PC-3 (cell line): ENCODE measurements at regions of chr6 and their contacts with region 1.

Region 1: DNA sequence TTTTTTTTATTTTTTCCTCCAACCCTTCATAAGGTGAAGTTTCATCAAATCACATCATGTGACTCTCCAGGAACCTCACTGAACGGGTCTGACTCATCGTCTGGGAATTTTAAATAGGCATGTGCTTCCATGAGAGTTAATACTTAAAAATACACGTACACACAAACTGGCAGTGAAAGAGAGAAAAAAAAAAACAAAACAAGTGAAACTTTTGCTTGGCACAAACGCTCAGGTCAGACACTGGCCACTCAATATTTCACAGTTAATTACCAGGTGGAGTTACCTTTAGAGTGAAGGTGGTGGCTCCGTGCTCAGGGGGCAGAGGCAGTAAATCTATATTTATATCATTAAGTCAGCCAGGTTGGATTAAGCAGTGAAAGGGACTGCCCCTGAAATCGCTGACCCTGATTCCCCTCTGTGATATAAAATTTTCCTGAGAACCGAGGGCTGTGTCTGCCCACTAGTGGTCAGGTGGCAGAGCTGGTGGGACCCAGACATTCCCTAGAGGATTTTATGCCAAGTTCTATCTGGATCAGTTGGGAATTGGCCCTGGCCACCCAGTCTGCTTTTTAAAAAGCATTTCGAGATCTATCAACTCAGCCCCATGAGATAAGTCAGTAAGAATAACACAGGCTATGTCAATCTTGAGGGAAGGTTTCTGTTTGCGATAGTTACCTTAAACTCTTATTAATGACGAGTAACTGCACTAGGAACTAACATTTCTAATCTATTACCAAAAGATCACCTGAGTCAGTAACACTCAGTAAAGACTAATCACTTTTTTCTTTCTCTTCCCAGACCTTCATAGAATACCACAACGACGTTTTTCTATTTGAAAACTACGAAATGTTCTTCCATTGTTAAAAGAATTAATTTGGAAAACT is 259.1 kb downstream of the HDGFL1 start:
- DNase-seq: peak; percentile 97
- ATAC-seq: peak; percentile 55
- H3K4me3 ChIP-seq: peak overlapping the region; percentile 42
- H3K27ac ChIP-seq: peak overlapping the region; percentile 77
- H3K4me1 ChIP-seq: peaks cover 42% of the 10 kb centered on the region
- H3K27me3 ChIP-seq: no peaks in the 10 kb centered on the region
- CTCF ChIP-seq: peak; percentile 94

Region 2: DNA sequence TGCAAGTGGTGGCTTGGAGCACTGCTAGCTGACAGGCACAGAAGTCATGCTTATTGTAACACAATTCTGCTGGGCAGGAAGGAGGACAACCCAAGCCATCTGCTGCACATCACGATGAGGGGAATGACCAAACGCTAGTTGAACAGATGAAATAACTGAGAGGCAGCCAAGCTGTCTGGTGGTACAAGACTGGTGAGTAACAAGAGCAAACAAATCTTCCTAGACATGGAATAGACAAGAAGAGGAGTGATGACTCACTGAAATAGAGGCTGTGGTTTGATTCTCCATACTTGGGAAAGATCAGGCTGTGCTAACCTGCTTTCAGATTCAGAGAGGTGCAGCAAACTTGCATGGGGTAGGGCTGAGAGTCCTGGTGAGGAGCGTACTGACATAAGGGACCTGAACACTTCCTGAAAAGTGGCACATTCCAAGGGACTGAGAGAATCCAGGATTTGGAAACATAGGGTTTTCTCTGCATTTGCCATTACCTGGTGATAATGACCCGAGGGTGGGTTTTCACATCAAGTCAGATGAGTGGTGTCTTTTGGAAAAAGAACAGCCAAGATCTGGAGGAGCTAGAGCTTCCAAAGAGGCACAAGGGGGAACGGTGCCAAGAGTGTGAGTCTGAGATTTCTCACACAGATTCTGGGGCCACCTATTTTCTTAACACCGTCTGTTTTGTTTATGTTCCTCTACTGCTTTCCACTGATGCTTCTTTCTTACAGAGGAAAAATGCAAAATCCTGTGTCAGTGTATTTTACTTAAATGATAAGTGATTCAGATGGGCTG is 591.6 kb before region 1 on chr6:
- CTCF ChIA-PET with region 1: no interaction called
- POLR2A ChIA-PET with region 1: no interaction called
- intact Hi-C with region 1: loop called (anchors 5 kb)
- DNase-seq: peak; percentile 97
- ATAC-seq: peak; percentile 90
- H3K4me3 ChIP-seq: peak overlapping the region; percentile 34; the same call in 1 of the 2 replicates
- H3K27ac ChIP-seq: peak overlapping the region; percentile 91
- H3K4me1 ChIP-seq: peaks cover 31% of the 10 kb centered on the region
- H3K27me3 ChIP-seq: no peaks in the 10 kb centered on the region
- CTCF ChIP-seq: no peak

Region 3: DNA sequence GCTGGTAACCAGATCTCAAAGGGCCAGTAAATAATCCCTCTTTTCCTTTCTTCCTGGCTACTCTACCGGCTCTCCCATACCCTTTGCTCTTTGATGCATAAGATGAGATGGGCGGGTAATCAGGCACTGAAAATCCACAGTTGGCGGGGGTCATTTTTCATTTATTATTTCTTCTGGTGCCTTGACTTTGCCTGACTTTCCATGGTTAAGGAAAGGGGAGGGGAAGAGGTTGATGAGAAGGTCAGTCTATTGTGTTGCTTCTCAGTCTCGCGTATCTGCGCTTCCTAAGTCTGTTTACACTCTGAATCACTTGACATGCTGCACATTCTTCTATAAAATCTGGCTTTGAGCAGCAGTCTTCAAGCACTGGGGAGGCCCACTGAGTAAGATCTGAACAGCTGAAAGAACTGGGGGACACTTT is 380.1 kb before region 1 on chr6:
- CTCF ChIA-PET with region 1: no interaction called
- POLR2A ChIA-PET with region 1: no interaction called
- intact Hi-C with region 1: loop called (anchors 5 kb)
- DNase-seq: peak; percentile 86
- ATAC-seq: peak; percentile 87
- H3K4me3 ChIP-seq: no peak overlapping the region
- H3K27ac ChIP-seq: peak overlapping the region; percentile 44
- H3K4me1 ChIP-seq: peaks cover 49% of the 10 kb centered on the region
- H3K27me3 ChIP-seq: no peaks in the 10 kb centered on the region
- CTCF ChIP-seq: no peak

Region 4: GRCh38 chr6:22717915-22718314 is 110.5 kb before region 1 on chr6:
- CTCF ChIA-PET with region 1: no interaction called
- POLR2A ChIA-PET with region 1: no interaction called
- intact Hi-C with region 1: loop called (anchors 1 kb)
- DNase-seq: peak; percentile 22
- ATAC-seq: no peak
- H3K4me3 ChIP-seq: no peak overlapping the region
- H3K27ac ChIP-seq: no peak overlapping the region
- H3K4me1 ChIP-seq: peaks cover 16% of the 10 kb centered on the region
- H3K27me3 ChIP-seq: no peaks in the 10 kb centered on the region
- CTCF ChIP-seq: no peak

Region 5: DNA sequence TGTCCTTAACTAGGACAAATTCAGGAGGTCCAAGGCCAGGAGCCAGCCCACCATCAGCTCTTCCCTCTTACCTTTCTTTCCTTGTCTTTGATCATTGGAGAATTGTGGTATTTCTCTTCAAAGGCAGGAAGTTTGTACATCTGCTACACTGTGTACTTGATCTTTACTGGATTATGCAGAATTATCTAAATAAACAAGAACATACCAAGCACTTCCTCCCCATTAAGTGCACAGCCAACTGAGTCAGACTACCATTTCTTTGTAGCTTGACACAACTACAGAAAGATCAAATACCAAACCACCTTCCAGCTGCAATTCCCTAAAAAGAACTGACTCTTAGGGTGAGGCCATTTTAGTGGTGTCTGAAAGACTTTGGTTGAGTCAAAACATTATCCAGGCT is 63.9 kb before region 1 on chr6:
- CTCF ChIA-PET with region 1: no interaction called
- POLR2A ChIA-PET with region 1: no interaction called
- intact Hi-C with region 1: no loop called
- DNase-seq: peak; percentile 78
- ATAC-seq: peak; percentile 90
- H3K4me3 ChIP-seq: no peak overlapping the region
- H3K27ac ChIP-seq: no peak overlapping the region; the same call in 1 of the 2 replicates
- H3K4me1 ChIP-seq: peaks cover 26% of the 10 kb centered on the region
- H3K27me3 ChIP-seq: no peaks in the 10 kb centered on the region
- CTCF ChIP-seq: no peak

Region 6: GRCh38 chr6:22848121-22848520 is 19.7 kb after region 1 on chr6:
- CTCF ChIA-PET with region 1: no interaction called
- POLR2A ChIA-PET with region 1: no interaction called
- intact Hi-C with region 1: no loop called
- DNase-seq: no peak
- ATAC-seq: no peak
- H3K4me3 ChIP-seq: no peak overlapping the region
- H3K27ac ChIP-seq: no peak overlapping the region
- H3K4me1 ChIP-seq: no peaks in the 10 kb centered on the region
- H3K27me3 ChIP-seq: no peaks in the 10 kb centered on the region
- CTCF ChIP-seq: no peak

Region 7: GRCh38 chr6:22873513-22874136 is 45.2 kb after region 1 on chr6:
- CTCF ChIA-PET with region 1: no interaction called
- POLR2A ChIA-PET with region 1: no interaction called
- intact Hi-C with region 1: no loop called
- DNase-seq: no peak
- ATAC-seq: no peak
- H3K4me3 ChIP-seq: no peak overlapping the region
- H3K27ac ChIP-seq: no peak overlapping the region
- H3K4me1 ChIP-seq: no peaks in the 10 kb centered on the region
- H3K27me3 ChIP-seq: no peaks in the 10 kb centered on the region
- CTCF ChIP-seq: no peak

Region 8: DNA sequence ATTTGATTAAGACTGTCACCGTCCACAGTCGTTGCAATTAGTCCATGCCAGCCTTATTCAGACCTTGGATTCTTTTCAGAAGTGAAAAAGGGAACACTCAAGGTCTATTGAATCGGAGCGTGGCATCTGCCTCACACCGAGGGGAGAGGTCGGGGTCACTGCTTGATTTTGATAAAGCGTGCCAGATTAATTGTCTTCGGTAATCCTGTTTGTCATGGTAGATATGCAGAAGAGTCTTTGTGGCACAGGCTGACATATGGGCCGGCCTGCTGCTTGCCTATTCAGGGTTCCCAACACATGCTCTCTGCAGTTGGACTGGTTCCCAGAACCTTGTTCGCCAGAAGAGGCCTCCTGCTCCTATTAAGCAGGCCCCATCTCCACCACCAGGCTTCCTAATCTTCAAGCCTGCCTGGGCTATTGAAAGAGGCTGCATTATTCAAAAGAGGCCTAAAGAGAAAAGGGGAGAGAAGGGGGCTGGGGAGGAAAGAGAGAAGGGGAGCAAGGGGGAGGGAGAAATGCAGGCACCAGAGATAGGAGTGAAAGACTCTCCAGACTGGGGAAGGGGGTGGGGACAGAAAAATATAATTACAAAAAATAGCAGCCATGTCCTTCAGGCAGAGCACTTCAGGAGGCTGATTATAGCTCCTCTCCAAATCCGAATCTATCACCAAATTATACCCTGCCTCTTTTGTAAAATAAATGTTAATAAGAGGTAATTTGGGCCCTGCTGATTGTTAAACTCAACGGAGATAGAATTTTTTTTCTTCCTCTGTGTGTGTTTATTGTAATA is 352.3 kb after region 1 on chr6:
- CTCF ChIA-PET with region 1: no interaction called
- POLR2A ChIA-PET with region 1: no interaction called
- intact Hi-C with region 1: loop called (anchors 5 kb)
- DNase-seq: no peak
- ATAC-seq: no peak
- H3K4me3 ChIP-seq: no peak overlapping the region
- H3K27ac ChIP-seq: no peak overlapping the region
- H3K4me1 ChIP-seq: peaks cover 6% of the 10 kb centered on the region
- H3K27me3 ChIP-seq: no peaks in the 10 kb centered on the region
- CTCF ChIP-seq: no peak